ENCODE measurements at regions of chr4 and their contacts with region 1.

Region 1: DNA sequence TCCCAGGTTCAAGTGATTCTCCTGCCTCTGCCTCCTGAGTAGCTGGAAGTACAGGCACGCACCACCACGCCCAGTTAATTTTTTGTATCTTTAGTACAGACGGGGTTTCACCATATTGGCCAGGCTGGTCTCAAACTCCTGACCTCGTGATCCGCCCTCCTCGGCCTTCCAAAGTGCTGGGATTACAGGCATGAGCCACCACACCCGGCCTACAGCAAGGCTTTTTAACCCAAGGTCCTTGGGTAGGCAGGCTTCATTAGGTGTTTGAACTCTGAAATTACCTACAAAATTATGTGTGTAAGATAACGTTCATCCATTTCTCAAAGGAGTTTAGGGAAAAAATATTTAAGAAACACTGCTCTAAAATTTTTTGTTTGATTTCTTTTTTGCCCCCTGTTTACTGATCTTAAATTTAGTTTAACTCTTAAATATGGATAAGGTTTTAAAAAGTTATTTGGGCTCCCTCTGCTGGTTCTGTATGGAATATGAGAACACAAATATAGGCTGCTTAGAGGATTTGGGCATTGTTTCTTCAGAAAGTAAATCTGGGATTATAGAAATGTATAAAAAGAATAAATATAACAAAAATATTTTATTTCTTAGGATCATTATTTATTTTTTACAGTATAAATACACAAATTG is 92.8 kb downstream of the CBR4 start:
- DNase-seq: no peak
- ATAC-seq: peak in 3 of 4 donors; percentile 70 to 72 (median 70)
- H3K4me3 ChIP-seq: no peak overlapping the region
- H3K27ac ChIP-seq: no peak overlapping the region
- H3K4me1 ChIP-seq: no peaks in the 10 kb centered on the region
- H3K27me3 ChIP-seq: no peaks in the 10 kb centered on the region
- CTCF ChIP-seq: peak; percentile 14 to 44 (median 34)

Region 2: DNA sequence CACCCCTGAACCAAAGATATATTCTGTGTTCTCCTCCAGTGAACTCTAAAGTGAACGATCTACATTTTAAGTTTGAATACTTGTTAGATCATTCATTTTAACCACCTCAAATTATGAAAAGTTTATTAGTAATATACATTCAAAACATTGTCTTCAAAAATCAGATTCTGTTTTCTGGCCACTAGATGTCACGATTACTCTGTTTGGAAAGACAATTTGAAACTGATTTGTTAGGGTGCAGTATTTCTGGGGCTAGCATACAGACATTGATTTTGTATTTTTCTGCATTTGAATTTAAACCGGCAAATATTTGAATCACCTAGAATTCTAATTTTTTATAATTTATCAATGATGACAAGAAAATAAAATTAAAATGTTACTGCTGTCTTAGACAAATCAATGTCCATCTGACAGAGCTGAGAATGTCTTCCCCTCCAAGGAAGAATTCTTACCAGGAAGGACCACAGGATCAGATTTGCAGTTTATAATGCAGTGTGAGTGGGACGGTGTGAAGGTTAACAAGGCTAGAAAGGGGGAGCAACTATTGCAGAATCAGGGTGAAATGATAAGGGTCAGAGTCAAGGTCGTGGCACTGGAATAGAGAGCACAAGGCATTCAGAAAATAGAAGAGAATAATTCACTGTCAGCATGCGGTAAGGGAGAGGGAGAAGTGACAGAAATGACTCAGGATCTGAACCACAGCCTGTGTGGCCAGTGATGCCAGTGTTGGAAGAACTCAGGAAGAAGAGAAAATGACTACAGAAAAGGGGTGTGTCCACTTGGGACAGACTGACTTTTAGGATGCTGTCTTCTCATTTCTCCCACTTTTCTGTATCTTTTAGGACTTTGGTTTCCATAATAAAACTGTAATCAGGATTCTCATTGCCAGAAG is 733.3 kb before region 1 on chr4:
- intact Hi-C with region 1: loop called in 1 of 3 experiments (anchors 10 kb)
- DNase-seq: no peak
- ATAC-seq: peak in 3 of 4 donors; percentile 49 to 57 (median 54)
- H3K4me3 ChIP-seq: no peak overlapping the region
- H3K27ac ChIP-seq: no peak overlapping the region
- H3K4me1 ChIP-seq: peaks cover 0 to 4% (median 0%) of the 10 kb centered on the region in 3 donors
- H3K27me3 ChIP-seq: no peaks in the 10 kb centered on the region
- CTCF ChIP-seq: peak in 3 of 4 donors; percentile 34 to 47 (median 35)

Region 3: GRCh38 chr4:168710353-168710946 is 206.8 kb before region 1 on chr4:
- intact Hi-C with region 1: loop called in 2 of 3 experiments (anchors 5 to 10 kb)
- DNase-seq: peak in 1 of 6 donors; percentile 25
- ATAC-seq: peak in 3 of 4 donors; percentile 72 to 81 (median 76)
- H3K4me3 ChIP-seq: no peak overlapping the region
- H3K27ac ChIP-seq: no peak overlapping the region
- H3K4me1 ChIP-seq: peaks cover 0 to 4% (median 0%) of the 10 kb centered on the region in 3 donors
- H3K27me3 ChIP-seq: no peaks in the 10 kb centered on the region
- CTCF ChIP-seq: peak in 2 of 4 donors; percentile 10 to 21

Measured in pancreas (tissue), 10 donors.